WTC11 (cell line): ENCODE measurements at regions of chr6 and their contacts with region 1.

Region 1: GRCh38 chr6:154460306-154461071 is 50.0 kb downstream of the CNKSR3 start:
- DNase-seq: no peak
- ATAC-seq: no peak
- H3K4me3 Mint-ChIP-seq: no peak overlapping the region
- H3K27ac Mint-ChIP-seq: peak overlapping the region; percentile 19; the same call in 1 of the 2 replicates
- H3K4me1 Mint-ChIP-seq: peaks cover 31% of the 10 kb centered on the region
- H3K27me3 Mint-ChIP-seq: no peaks in the 10 kb centered on the region
- CTCF ChIP-seq: no peak

Region 2: DNA sequence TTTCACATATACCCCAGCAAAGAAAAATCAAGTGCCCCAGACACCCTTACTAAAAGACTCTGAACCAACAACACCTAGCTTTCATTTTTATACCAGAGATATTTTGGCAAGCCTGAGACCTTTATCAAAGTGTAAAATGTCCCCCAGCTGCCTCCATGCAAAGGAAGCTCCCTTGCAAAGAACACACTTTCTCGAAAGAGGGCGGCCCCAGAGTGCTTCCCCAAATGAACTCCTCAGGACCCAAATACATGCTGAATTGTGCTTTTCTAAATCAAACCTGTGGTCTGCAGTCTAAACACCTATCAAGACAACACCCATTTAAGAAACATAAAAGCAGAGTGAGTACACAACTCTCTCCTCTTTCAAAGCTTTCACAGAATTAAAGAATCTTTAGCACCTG is 104.4 kb before region 1 on chr6:
- CTCF ChIA-PET with region 1: no interaction called
- POLR2A ChIA-PET with region 1: interaction called, 10 read pairs
- DNase-seq: no peak
- ATAC-seq: no peak
- H3K4me3 Mint-ChIP-seq: no peak overlapping the region
- H3K27ac Mint-ChIP-seq: no peak overlapping the region
- H3K4me1 Mint-ChIP-seq: peaks cover 5% of the 10 kb centered on the region; the same call in 1 of the 2 replicates
- H3K27me3 Mint-ChIP-seq: no peaks in the 10 kb centered on the region
- CTCF ChIP-seq: no peak